SK-N-SH (cell line): ENCODE measurements at regions of chr7 and their contacts with region 1.

Region 1: GRCh38 chr7:103074519-103075336 is at the starts of genes ARMC10 and FBXL13:
- DNase-seq: peak; percentile 99
- H3K4me3 ChIP-seq: peak within 1 kb of the TSS; percentile 74 to 83
- H3K27ac ChIP-seq: peak within 1 kb of the TSS; percentile 89 to 95
- H3K4me1 ChIP-seq: peaks cover 0 to 17% of the 10 kb centered on the region in 2 experiments; a peak in 2 of 4 replicates
- H3K27me3 ChIP-seq: no peaks in the 10 kb centered on the region
- CTCF ChIP-seq: peak; percentile 29
- EP300 ChIP-seq: no peak; a peak in 2 of 4 replicates
- RAD21 ChIP-seq: no peak
- polyA plus RNA-seq, gene ARMC10: 43.4 and 54.1 TPM in 2 replicates
- polyA plus RNA-seq, gene FBXL13: 1.1 and 2.0 TPM in 2 replicates

Region 2: DNA sequence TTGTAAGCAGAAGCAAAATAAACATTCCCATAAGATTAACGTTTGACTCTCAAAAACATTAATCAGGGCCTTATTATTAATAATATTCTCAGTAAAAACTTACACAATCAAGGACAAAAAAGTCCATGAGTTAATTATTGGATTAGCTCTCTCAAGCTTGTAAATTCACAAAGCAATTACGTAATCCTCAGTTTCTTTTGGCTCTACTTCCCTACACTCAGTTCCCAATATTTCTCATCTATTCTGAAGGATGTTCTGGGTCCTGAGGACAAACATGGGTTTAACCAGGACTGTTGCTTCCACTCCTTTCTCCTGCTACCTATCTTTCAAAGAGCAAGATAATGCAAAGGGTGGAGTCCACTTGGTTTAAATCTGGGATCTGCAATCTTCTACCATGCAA is 15.3 kb before region 1 on chr7:
- CTCF ChIA-PET with region 1: interaction called, 54 read pairs
- POLR2A ChIA-PET with region 1: no interaction called
- DNase-seq: no peak
- H3K4me3 ChIP-seq: no peak overlapping the region
- H3K27ac ChIP-seq: no peak overlapping the region
- H3K4me1 ChIP-seq: no peaks in the 10 kb centered on the region; a peak in 1 of 4 replicates
- H3K27me3 ChIP-seq: no peaks in the 10 kb centered on the region
- CTCF ChIP-seq: no peak
- EP300 ChIP-seq: no peak
- RAD21 ChIP-seq: no peak

Region 3: DNA sequence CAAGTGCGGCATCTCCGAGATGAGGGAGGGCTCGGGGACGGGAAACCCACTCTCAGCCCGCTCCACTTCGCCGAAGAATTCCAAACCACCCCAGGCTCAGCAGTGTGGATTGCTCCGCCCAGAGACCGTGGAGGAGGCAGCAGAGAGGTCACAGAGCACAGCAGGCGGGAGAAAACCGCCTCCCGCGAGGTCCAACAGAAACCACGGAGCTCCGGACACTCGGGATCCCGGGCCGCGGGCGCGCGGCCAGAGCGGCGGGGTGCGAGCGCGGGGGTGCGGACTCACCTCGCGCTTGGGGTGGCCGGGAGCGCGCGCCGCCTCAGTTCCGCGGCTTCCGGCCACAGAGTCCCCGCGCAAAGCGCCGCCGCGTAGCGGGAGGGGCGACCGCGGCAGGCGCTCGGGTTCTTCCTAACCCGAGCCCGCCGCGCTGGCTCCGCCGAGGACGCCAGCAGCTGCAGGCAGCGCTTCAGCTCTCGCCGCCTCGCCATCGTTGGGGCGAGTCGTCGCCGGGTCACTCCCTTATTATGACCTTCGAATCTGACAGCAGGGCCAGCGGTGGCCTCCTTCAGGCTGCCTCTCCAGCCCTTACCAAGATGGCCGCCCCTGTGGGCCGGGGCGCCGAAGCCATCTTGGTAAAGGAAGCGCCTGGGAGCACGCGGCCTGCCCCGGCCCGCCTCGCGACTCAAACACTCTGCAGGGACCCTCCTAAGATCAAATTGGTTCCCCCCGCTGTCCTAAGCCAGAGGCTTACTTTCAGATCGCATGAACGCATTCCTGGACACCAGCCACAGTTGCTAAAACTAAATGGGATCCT is 74.5 kb after region 1 on chr7 and contains the start of gene NAPEPLD:
- CTCF ChIA-PET with region 1: no interaction called
- POLR2A ChIA-PET with region 1: interaction called, 12 read pairs
- DNase-seq: peak; percentile 97
- H3K4me3 ChIP-seq: peak within 1 kb of the TSS; percentile 72 to 96
- H3K27ac ChIP-seq: peak within 1 kb of the TSS; percentile 91 to 99
- H3K4me1 ChIP-seq: peaks cover 4 to 16% of the 10 kb centered on the region in 2 experiments; a peak in 2 of 4 replicates
- H3K27me3 ChIP-seq: no peaks in the 10 kb centered on the region
- CTCF ChIP-seq: no peak
- EP300 ChIP-seq: peak in 1 of 2 experiments; percentile 29; a peak in 1 of 4 replicates
- RAD21 ChIP-seq: 0 out of 2 replicates have a peak, but pooled peaks have one; percentile 4
- polyA plus RNA-seq, gene NAPEPLD: 4.6 and 5.4 TPM in 2 replicates